HepG2 (cell line): ENCODE measurements at regions of chr5 and their contacts with region 1.

Region 1: DNA sequence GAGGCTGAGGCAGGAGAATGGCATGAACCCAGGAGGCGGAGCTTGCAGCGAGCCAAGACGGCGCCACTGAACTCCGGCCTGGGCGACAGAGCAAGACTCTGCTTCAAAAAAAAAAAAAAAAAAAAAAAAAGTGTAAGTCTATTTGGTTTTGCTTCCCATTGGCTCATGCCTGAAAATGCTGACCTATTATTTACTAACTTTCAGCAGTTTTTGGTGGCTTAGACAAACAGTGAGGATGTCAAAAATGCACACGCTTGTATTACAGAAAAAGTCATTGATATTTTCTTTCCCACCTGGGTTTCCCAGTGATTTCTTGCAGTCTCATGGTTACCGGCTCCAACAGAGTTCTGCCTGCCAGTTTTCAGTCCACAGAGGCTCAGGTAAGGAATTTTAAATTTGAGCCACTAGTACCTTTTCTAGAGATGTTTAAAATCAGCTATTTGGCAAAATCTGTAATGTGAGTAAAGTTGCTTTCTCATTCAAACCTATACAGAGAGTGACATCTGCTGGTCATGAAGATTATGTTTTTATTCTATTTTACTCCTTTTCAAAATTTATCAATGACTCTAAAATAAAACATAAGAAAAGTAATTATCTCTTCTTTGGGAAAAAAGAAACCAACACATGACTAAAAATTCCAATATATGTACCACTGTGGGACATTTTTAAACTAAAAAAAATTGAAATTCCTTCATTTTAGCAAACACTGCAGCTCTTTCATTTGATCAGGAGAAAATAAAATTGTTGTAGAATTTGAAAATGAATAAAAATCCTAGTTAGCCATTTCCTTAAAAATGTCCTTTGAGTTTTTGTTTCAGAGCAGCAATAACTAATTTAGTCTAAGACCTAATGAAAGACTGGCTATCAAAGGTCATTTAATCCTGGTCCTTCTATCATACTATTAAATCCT is 8.8 kb downstream of the FAM200C start:
- DNase-seq: peak; percentile 23
- ATAC-seq: no peak
- H3K4me3 ChIP-seq: no peak overlapping the region
- H3K27ac ChIP-seq: no peak overlapping the region
- H3K4me1 ChIP-seq: no peaks in the 10 kb centered on the region
- H3K27me3 ChIP-seq: no peaks in the 10 kb centered on the region
- CTCF ChIP-seq: peak; percentile 25; the same call in 1 of the 2 replicates
- EP300 ChIP-seq: no peak
- POLR2A ChIP-seq: no peak
- RAD21 ChIP-seq: no peak

Region 2: GRCh38 chr5:160105686-160106360 is 285.2 kb before region 1 on chr5:
- CTCF ChIA-PET with region 1: no interaction called
- POLR2A ChIA-PET with region 1: no interaction called
- in situ Hi-C with region 1: no loop called
- intact Hi-C with region 1: no loop called
- DNase-seq: no peak
- ATAC-seq: no peak
- H3K4me3 ChIP-seq: no peak overlapping the region
- H3K27ac ChIP-seq: no peak overlapping the region
- H3K4me1 ChIP-seq: no peaks in the 10 kb centered on the region
- H3K27me3 ChIP-seq: no peaks in the 10 kb centered on the region
- CTCF ChIP-seq: no peak
- EP300 ChIP-seq: no peak
- POLR2A ChIP-seq: no peak
- RAD21 ChIP-seq: no peak

Region 3: DNA sequence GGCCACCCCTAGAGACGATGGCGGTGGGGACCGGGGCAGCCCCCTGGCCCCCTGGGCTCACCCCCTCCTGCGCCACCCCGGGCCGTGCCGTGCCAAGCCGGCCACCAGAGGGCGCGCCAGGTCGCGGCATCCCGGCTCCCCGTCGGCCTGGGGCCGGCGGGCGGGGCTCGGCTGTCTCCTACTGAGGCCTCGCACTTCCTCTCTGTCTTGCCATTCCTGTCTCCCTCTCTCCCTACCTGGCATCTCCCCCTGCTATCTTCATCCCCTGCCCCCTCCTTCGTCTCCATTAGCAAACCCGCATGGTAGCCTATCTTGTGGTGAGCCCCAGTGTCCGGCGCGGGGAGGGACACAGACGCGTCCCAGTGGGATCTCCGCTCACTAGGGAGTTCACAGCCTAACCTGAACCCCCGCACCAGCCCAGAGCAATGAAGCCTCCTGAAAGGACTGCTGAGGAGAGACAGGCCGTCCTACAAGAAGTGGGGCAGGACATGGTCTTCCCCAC is 191.6 kb before region 1 on chr5:
- CTCF ChIA-PET with region 1: interaction called, 12 read pairs
- POLR2A ChIA-PET with region 1: no interaction called
- in situ Hi-C with region 1: no loop called
- intact Hi-C with region 1: no loop called
- DNase-seq: no peak
- ATAC-seq: peak; percentile 98
- H3K4me3 ChIP-seq: peak overlapping the region in 2 of 3 experiments; percentile 39 to 50; a peak in 4 of 6 replicates
- H3K27ac ChIP-seq: no peak overlapping the region
- H3K4me1 ChIP-seq: peaks cover 13% of the 10 kb centered on the region; the same call in 1 of the 2 replicates
- H3K27me3 ChIP-seq: peaks cover 3 to 11% of the 10 kb centered on the region in 2 experiments; a peak in 3 of 5 replicates
- CTCF ChIP-seq: peak; percentile 83
- EP300 ChIP-seq: no peak
- POLR2A ChIP-seq: no peak
- RAD21 ChIP-seq: peak; percentile 94

Region 4: GRCh38 chr5:160293901-160294561 is 97.0 kb before region 1 on chr5:
- CTCF ChIA-PET with region 1: no interaction called
- POLR2A ChIA-PET with region 1: no interaction called
- in situ Hi-C with region 1: no loop called
- intact Hi-C with region 1: no loop called
- DNase-seq: peak; percentile 9
- ATAC-seq: peak; percentile 44
- H3K4me3 ChIP-seq: no peak overlapping the region
- H3K27ac ChIP-seq: no peak overlapping the region
- H3K4me1 ChIP-seq: peaks cover 9% of the 10 kb centered on the region; the same call in 1 of the 2 replicates
- H3K27me3 ChIP-seq: no peaks in the 10 kb centered on the region
- CTCF ChIP-seq: no peak
- EP300 ChIP-seq: no peak
- POLR2A ChIP-seq: no peak
- RAD21 ChIP-seq: no peak

Region 5: DNA sequence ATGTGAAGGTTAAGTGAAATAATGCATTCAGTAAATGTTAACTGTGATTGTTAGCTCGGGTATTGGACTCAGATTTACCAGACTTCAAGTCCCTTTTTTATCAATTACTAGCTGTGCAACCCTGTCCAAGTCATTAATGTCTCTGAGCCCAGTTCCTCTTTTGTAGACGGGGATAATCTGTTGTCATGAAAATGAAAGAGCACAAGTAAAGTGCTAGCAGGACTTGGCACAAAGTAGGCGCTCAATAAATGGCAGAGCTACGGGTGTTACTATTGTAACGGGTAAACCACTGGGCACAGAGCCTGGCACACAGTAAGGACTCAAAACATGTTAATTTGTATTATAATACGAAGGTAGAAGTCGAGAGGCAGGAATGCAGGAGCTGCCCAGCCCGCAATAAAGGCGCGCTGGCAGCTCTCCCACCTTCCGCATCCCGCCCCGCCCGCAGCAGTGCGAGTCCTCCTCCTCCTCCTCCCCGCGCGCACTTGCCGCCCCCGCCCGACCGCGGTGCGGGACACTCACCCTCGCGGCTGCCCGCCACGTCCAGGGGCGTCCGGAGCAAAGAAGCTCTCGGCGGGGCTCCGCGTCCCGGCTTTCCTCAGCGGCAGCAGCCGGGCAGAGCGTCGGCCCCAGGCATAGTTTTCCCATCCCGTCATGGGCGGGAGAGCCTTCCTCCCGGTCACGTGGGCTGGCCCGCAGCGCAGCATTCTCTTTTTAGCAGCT is 20.9 kb before region 1 on chr5 and contains the start of gene C1QTNF2:
- CTCF ChIA-PET with region 1: no interaction called
- POLR2A ChIA-PET with region 1: no interaction called
- in situ Hi-C with region 1: no loop called
- intact Hi-C with region 1: no loop called
- DNase-seq: no peak
- ATAC-seq: peak; percentile 78
- H3K4me3 ChIP-seq: peak within 1 kb of the TSS in 2 of 3 experiments; percentile 37 to 48; a peak in 4 of 6 replicates
- H3K27ac ChIP-seq: no peak within 1 kb of the TSS
- H3K4me1 ChIP-seq: no peaks in the 10 kb centered on the region
- H3K27me3 ChIP-seq: peaks cover 7 to 32% of the 10 kb centered on the region in 2 experiments; a peak in 4 of 5 replicates
- CTCF ChIP-seq: no peak
- EP300 ChIP-seq: no peak
- POLR2A ChIP-seq: no peak
- RAD21 ChIP-seq: no peak
- total RNA-seq, gene C1QTNF2: not detected in 2 replicates

Region 6: DNA sequence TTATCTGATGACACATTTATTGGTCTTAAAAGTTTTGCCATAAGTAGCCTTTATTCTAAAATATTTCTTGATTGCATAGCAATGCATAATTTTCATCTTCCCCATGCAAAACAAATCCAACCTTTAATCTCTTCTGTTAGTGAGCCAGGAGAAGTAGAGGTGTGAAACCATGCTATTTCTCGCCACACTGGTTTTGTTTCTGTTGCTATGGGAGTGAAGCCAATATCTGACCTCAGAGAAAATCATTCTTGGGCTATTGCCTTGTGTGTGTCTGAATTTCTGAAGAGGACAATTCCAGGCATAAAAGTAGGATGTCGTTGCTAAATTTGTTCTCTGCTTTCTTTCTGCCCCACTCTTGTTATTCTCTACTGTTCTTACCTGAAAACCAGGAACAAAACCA is 214.2 kb after region 1 on chr5:
- CTCF ChIA-PET with region 1: no interaction called
- POLR2A ChIA-PET with region 1: no interaction called
- in situ Hi-C with region 1: no loop called
- intact Hi-C with region 1: no loop called
- DNase-seq: no peak
- ATAC-seq: no peak
- H3K4me3 ChIP-seq: no peak overlapping the region
- H3K27ac ChIP-seq: no peak overlapping the region
- H3K4me1 ChIP-seq: no peaks in the 10 kb centered on the region
- H3K27me3 ChIP-seq: no peaks in the 10 kb centered on the region
- CTCF ChIP-seq: no peak
- EP300 ChIP-seq: no peak
- POLR2A ChIP-seq: no peak
- RAD21 ChIP-seq: no peak